ENCODE measurements at regions of chr3 and their contacts with region 1.

Region 1: GRCh38 chr3:141431411-141432378 is 55.1 kb upstream of the RASA2 start:
- DNase-seq: no peak
- ATAC-seq: no peak
- H3K4me3 ChIP-seq: no peak overlapping the region
- H3K4me3 Mint-ChIP-seq: no peak overlapping the region
- H3K27ac ChIP-seq: no peak overlapping the region
- H3K27ac Mint-ChIP-seq: no peak overlapping the region
- H3K4me1 ChIP-seq: no peaks in the 10 kb centered on the region
- H3K4me1 Mint-ChIP-seq: peaks cover 9% of the 10 kb centered on the region
- H3K27me3 ChIP-seq: no peaks in the 10 kb centered on the region
- H3K27me3 Mint-ChIP-seq: no peaks in the 10 kb centered on the region
- CTCF ChIP-seq: no peak

Region 2: DNA sequence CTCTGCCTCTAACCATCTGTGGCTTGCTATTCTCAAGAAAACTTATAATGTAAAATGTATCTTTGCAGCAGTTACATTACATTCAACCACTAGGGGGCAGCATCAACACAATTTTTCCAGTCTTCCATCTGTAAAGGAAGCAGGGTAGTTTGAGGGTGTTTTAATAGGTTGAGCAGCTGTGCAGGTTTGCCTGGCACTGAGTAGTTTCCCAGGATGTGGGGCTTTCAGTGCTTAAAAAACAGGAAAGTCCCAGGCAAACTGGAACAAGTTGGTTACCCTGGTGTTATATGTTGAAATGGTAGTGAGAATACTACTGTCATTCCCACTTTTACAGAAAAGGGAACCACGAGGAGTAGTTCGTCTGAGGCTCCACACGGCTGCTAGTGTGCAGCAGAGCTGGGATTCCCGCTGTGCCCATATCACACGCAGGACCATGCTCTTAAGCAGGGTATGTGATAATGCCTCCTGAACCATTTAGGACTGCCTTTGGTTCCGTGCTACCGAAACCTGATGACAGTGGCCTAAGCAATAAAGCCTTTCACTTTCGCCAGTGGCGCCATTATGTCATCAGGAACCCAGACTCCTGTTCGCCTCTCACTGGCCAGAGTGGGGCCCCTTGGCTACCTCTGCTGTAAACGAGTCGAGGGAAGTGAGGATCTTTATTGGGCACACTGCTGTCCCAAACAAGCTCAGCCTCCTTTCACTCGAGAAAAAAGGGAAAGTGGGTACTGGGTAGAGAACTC is 128.0 kb before region 1 on chr3:
- CTCF ChIA-PET with region 1: interaction called, 11 read pairs
- POLR2A ChIA-PET with region 1: no interaction called
- intact Hi-C with region 1: no loop called
- DNase-seq: peak; percentile 83
- ATAC-seq: peak; percentile 78
- H3K4me3 ChIP-seq: no peak overlapping the region
- H3K4me3 Mint-ChIP-seq: no peak overlapping the region
- H3K27ac ChIP-seq: no peak overlapping the region
- H3K27ac Mint-ChIP-seq: no peak overlapping the region
- H3K4me1 ChIP-seq: peaks cover 0 to 5% of the 10 kb centered on the region in 2 donors
- H3K4me1 Mint-ChIP-seq: no peaks in the 10 kb centered on the region
- H3K27me3 ChIP-seq: no peaks in the 10 kb centered on the region
- H3K27me3 Mint-ChIP-seq: no peaks in the 10 kb centered on the region
- CTCF ChIP-seq: peak; percentile 84

Region 3: GRCh38 chr3:141360888-141361598 is 70.7 kb before region 1 on chr3:
- CTCF ChIA-PET with region 1: interaction called, 8 read pairs
- POLR2A ChIA-PET with region 1: interaction called, 11 read pairs
- intact Hi-C with region 1: no loop called
- DNase-seq: peak; percentile 54
- ATAC-seq: peak; percentile 65
- H3K4me3 ChIP-seq: no peak overlapping the region
- H3K4me3 Mint-ChIP-seq: peak overlapping the region; percentile 3
- H3K27ac ChIP-seq: no peak overlapping the region
- H3K27ac Mint-ChIP-seq: no peak overlapping the region
- H3K4me1 ChIP-seq: no peaks in the 10 kb centered on the region
- H3K4me1 Mint-ChIP-seq: no peaks in the 10 kb centered on the region
- H3K27me3 ChIP-seq: no peaks in the 10 kb centered on the region
- H3K27me3 Mint-ChIP-seq: no peaks in the 10 kb centered on the region
- CTCF ChIP-seq: peak; percentile 58

Region 4: GRCh38 chr3:142568393-142569017 is 1136.8 kb after region 1 on chr3:
- CTCF ChIA-PET with region 1: no interaction called
- POLR2A ChIA-PET with region 1: no interaction called
- intact Hi-C with region 1: no loop called
- DNase-seq: no peak
- ATAC-seq: no peak
- H3K4me3 ChIP-seq: no peak overlapping the region
- H3K4me3 Mint-ChIP-seq: no peak overlapping the region
- H3K27ac ChIP-seq: no peak overlapping the region
- H3K27ac Mint-ChIP-seq: no peak overlapping the region
- H3K4me1 ChIP-seq: no peaks in the 10 kb centered on the region
- H3K4me1 Mint-ChIP-seq: peaks cover 6% of the 10 kb centered on the region
- H3K27me3 ChIP-seq: no peaks in the 10 kb centered on the region
- H3K27me3 Mint-ChIP-seq: no peaks in the 10 kb centered on the region
- CTCF ChIP-seq: no peak